HCT116 (cell line): ENCODE measurements at regions of chr19 and their contacts with region 1.

Region 1: GRCh38 chr19:41795031-41795461 is 1.3 kb upstream of the CEACAM3 start:
- DNase-seq: peak; percentile 38
- ATAC-seq: peak; percentile 93
- H3K4me3 ChIP-seq: no peak overlapping the region
- H3K27ac ChIP-seq: no peak overlapping the region
- H3K4me1 ChIP-seq: no peaks in the 10 kb centered on the region; a peak in 1 of 4 replicates
- H3K27me3 ChIP-seq: peaks cover 22% of the 10 kb centered on the region; the same call in 1 of the 2 replicates
- CTCF ChIP-seq: peak; percentile 54 to 89 (median 83)
- POLR2A ChIP-seq: no peak
- RAD21 ChIP-seq: peak; percentile 41

Region 2: GRCh38 chr19:41821003-41821735 is 26.1 kb after region 1 on chr19:
- CTCF ChIA-PET with region 1: interaction called, 80 read pairs
- POLR2A ChIA-PET with region 1: no interaction called
- RAD21 ChIA-PET with region 1: interaction called, 3 read pairs
- intact Hi-C with region 1: loop called (anchors 1 kb)
- DNase-seq: peak; percentile 57
- ATAC-seq: peak; percentile 97
- H3K4me3 ChIP-seq: no peak overlapping the region
- H3K27ac ChIP-seq: no peak overlapping the region
- H3K4me1 ChIP-seq: no peaks in the 10 kb centered on the region
- H3K27me3 ChIP-seq: peaks cover 4% of the 10 kb centered on the region
- CTCF ChIP-seq: peak; percentile 79 to 83 (median 83)
- POLR2A ChIP-seq: no peak
- RAD21 ChIP-seq: peak; percentile 81

Region 3: GRCh38 chr19:41837981-41838708 is 43.1 kb after region 1 on chr19:
- CTCF ChIA-PET with region 1: interaction called, 6 read pairs
- POLR2A ChIA-PET with region 1: no interaction called
- RAD21 ChIA-PET with region 1: no interaction called
- intact Hi-C with region 1: loop called (anchors 5 kb)
- DNase-seq: no peak
- ATAC-seq: no peak
- H3K4me3 ChIP-seq: no peak overlapping the region
- H3K27ac ChIP-seq: no peak overlapping the region
- H3K4me1 ChIP-seq: no peaks in the 10 kb centered on the region
- H3K27me3 ChIP-seq: peaks cover 15% of the 10 kb centered on the region; the same call in 1 of the 2 replicates
- CTCF ChIP-seq: no peak
- POLR2A ChIP-seq: no peak
- RAD21 ChIP-seq: no peak